ENCODE measurements at regions of chr15 and their contacts with region 1.

Region 1: DNA sequence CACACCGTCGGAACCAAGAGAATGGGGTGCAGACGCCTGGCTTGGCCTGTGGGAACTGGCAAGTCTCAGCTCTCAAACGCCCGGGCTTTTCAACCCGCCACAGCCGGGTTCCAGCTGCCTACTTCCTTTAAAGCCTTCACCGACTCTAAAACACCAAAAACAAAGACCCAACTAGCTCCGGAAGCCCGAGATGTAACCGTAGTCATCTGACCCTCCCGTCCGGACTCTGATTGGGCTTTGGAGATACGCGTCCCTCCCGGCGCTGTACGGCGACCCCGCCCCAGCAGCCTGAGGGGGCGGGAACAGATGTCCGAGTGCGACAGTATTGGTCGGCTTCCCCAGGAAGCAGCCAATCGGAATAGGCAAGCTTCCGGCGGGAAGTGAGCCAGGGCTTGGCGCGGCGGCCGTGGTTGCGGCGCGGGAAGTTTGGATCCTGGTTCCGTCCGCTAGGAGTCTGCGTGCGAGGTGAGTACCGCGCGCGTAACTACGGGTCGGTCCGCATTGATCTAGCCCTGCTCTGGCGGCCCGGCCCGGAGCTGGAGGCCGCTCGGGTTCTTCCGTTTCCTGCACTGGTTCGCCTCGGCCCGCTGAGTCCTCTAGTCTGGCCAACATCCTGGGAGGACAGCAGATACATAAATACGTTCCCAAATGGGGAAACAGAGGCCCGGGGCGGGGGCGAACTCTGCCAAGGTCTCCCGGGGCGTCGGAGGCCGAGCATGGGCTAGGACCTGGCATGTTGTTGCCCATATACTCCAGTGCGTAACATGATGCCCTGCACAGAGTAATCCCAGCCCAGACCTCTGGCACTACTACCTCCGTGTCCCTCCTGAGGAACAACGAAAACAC is at the start of gene BLM:
- DNase-seq: peak; percentile 97
- H3K4me3 Mint-ChIP-seq: peak within 1 kb of the TSS; percentile 83
- H3K27ac Mint-ChIP-seq: peak within 1 kb of the TSS; percentile 94
- H3K4me1 Mint-ChIP-seq: peaks cover 36% of the 10 kb centered on the region
- H3K27me3 Mint-ChIP-seq: no peaks in the 10 kb centered on the region
- total RNA-seq, gene BLM: 59.4 to 63.7 TPM

Region 2: GRCh38 chr15:90550919-90551318 is 166.3 kb before region 1 on chr15:
- CTCF ChIA-PET with region 1: no interaction called
- POLR2A ChIA-PET with region 1: no interaction called
- DNase-seq: no peak
- H3K4me3 Mint-ChIP-seq: no peak overlapping the region
- H3K27ac Mint-ChIP-seq: no peak overlapping the region
- H3K4me1 Mint-ChIP-seq: peaks cover 39% of the 10 kb centered on the region
- H3K27me3 Mint-ChIP-seq: no peaks in the 10 kb centered on the region

Region 3: DNA sequence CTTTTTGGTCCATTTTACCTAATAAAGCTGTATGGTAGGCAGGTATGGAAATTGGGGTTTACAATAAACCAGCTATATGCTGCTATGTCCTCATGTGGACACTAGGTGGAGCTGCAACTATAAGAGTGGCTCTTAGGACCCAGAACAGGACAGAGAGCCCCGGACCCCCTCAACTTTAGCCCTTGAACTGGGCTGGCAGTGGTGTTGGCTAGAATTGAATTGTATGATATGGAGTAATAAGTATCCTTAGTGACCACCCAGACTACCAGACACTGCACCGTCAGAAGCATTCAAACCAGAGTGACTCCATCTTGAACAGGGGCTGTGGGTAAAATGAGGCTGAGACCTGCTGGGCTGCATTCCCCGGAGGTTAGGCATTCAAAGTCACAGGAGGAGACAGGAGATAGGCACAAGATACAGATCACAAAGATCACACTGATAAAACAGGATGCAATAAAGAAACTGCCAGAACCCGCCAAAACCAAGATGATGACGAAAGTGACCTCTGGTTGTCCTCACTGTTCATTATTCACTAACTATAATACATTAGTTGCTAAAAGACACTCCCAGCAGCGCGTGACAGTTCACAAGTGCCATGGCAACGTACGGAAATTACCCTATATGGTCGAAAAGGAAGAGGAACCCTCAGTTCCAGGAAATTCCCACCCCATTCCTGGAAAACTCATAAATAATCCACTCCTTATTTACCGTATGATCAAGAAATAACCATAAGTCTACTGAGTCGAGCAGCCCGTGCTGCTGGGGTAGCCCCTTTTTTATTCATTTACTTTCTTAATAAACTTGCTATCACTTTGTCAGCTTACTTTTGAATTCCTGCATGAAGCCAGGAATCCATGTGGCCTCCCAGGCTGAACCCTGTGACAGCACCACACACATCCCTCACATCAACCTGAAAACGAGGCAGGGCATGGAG is 68.8 kb before region 1 on chr15:
- CTCF ChIA-PET with region 1: interaction called, 22 read pairs
- POLR2A ChIA-PET with region 1: interaction called, 44 read pairs
- DNase-seq: peak; percentile 90
- H3K4me3 Mint-ChIP-seq: peak overlapping the region; percentile 21
- H3K27ac Mint-ChIP-seq: peak overlapping the region; percentile 92
- H3K4me1 Mint-ChIP-seq: peaks cover 48% of the 10 kb centered on the region
- H3K27me3 Mint-ChIP-seq: no peaks in the 10 kb centered on the region

Region 4: GRCh38 chr15:90660195-90660998 is 56.8 kb before region 1 on chr15:
- CTCF ChIA-PET with region 1: interaction called, 3 read pairs
- POLR2A ChIA-PET with region 1: interaction called, 18 read pairs
- DNase-seq: peak; percentile 85
- H3K4me3 Mint-ChIP-seq: peak overlapping the region; percentile 67
- H3K27ac Mint-ChIP-seq: peak overlapping the region; percentile 83
- H3K4me1 Mint-ChIP-seq: peaks cover 84% of the 10 kb centered on the region
- H3K27me3 Mint-ChIP-seq: peaks cover 29% of the 10 kb centered on the region

Region 5: GRCh38 chr15:90686435-90687218 is 30.6 kb before region 1 on chr15:
- CTCF ChIA-PET with region 1: interaction called, 5 read pairs
- POLR2A ChIA-PET with region 1: interaction called, 16 read pairs
- DNase-seq: peak; percentile 56
- H3K4me3 Mint-ChIP-seq: peak overlapping the region; percentile 15
- H3K27ac Mint-ChIP-seq: peak overlapping the region; percentile 100
- H3K4me1 Mint-ChIP-seq: peaks cover 54% of the 10 kb centered on the region
- H3K27me3 Mint-ChIP-seq: no peaks in the 10 kb centered on the region

Region 6: GRCh38 chr15:90780916-90781315 is 63.7 kb after region 1 on chr15:
- CTCF ChIA-PET with region 1: interaction called, 5 read pairs
- POLR2A ChIA-PET with region 1: interaction called, 10 read pairs
- DNase-seq: peak; percentile 55
- H3K4me3 Mint-ChIP-seq: peak overlapping the region; percentile 5
- H3K27ac Mint-ChIP-seq: peak overlapping the region; percentile 82
- H3K4me1 Mint-ChIP-seq: peaks cover 43% of the 10 kb centered on the region
- H3K27me3 Mint-ChIP-seq: no peaks in the 10 kb centered on the region

Region 7: GRCh38 chr15:90851114-90851513 is 133.9 kb after region 1 on chr15:
- CTCF ChIA-PET with region 1: interaction called, 3 read pairs
- POLR2A ChIA-PET with region 1: interaction called, 24 read pairs
- DNase-seq: peak; percentile 80
- H3K4me3 Mint-ChIP-seq: peak overlapping the region; percentile 63
- H3K27ac Mint-ChIP-seq: peak overlapping the region; percentile 91
- H3K4me1 Mint-ChIP-seq: peaks cover 77% of the 10 kb centered on the region
- H3K27me3 Mint-ChIP-seq: no peaks in the 10 kb centered on the region

Region 8: GRCh38 chr15:90886041-90886614 is 168.9 kb after region 1 on chr15:
- CTCF ChIA-PET with region 1: interaction called, 32 read pairs
- POLR2A ChIA-PET with region 1: interaction called, 11 read pairs
- DNase-seq: peak; percentile 83
- H3K4me3 Mint-ChIP-seq: no peak overlapping the region
- H3K27ac Mint-ChIP-seq: peak overlapping the region; percentile 78
- H3K4me1 Mint-ChIP-seq: peaks cover 57% of the 10 kb centered on the region
- H3K27me3 Mint-ChIP-seq: no peaks in the 10 kb centered on the region

Measured in activated CD4-positive, alpha-beta memory T cell treated with anti-CD3 and anti-CD28 coated beads, Interleukin-2, amount 10 ng/mL, durations not matched to agents 7 days and 5 days (primary cell).